Ovary (tissue), 10 donors: ENCODE measurements at regions of chr3 and their contacts with region 1.

Region 1: DNA sequence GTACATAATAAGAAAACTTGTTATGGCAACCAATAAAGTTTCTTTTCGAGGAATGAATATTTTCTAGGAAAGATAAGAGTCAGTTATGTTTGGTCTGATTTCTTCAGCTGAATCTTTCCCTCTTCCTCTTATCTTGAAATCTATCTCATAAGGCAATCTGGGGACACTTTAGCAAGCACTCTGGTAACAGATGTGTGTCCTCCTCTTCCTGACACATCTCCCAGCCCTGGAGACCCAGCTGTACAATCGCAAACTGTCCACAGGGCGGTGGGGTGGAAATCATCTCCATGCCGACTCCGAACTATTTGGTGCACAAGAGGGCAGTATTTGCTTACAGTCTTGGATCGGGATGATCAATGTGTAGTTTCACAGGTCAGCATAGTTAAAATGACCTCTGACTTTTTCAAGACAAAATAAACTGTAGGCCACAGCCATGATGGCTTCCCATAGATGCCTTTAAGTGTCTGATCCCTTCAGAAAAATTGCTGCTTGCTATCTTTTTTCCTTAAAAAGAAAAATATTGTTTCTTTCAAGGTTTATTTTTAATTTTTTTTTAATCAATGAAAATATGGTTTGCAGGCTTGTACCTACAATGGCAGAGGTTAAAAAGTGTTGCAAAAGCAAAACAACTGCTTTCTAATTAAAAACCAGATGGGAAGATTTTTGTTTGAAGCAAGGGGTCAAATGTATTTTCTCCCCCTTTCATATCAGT is 17.7 kb downstream of the EEFSEC start:
- DNase-seq: peak; percentile 58 to 73 (median 67)
- H3K4me3 ChIP-seq: no peak overlapping the region
- H3K27ac ChIP-seq: no peak overlapping the region
- H3K4me1 ChIP-seq: peaks cover 2% of the 10 kb centered on the region
- H3K27me3 ChIP-seq: no peaks in the 10 kb centered on the region
- CTCF ChIP-seq: peak; percentile 42 to 86 (median 78)
- EP300 ChIP-seq: no peak
- POLR2A ChIP-seq: no peak

Region 2: DNA sequence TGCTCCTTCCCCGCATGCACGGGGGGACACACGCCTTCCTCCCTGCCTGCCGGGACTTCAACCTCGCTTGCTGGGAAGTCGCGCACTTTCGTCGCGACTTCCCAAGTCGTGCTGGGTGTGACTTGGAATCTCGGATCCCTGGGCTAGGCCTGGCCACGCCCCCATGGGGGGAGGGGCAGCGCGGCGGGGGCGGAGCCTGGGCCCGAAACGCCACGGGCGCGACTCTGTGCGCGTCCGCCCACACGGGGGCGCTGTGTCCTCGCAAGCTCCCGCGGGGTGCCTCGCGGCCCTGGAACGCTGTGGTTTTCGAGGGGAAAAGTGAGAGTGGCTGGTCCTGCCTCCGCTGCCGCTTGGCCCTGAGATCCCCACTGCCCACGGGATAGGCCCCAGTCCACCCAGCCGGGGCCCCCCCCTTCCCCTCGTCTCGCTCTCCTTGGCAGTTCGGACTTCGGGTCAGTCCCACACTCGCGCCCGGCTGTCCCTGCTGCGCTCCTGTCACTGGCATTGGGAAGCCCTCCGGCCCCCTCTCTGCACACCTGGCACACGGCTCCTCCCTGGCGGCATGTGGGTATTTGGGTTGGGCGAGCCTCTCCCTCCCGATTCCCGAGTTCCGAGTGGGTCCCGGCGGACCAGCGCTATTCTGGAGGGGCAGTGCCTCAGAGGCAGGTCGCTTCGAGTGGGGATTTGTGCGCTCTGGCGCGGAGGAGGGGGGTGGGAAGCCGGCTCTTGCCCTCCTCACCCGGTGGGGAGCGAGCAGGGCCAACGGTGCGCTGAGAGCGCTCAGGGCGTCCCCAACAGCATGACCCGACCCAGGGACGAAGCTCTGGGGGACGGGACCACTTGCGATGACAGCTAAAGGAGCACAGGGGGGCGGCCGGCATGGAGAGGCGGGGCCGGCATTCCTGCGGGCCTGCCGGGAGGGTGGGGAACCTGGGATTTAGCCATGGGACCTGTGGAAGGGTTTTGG is 95.2 kb before region 1 on chr3:
- intact Hi-C with region 1: loop called in 1 of 4 experiments (anchors 5 kb)
- DNase-seq: peak; percentile 81 to 95 (median 92)
- H3K4me3 ChIP-seq: peak overlapping the region; percentile 32
- H3K27ac ChIP-seq: no peak overlapping the region
- H3K4me1 ChIP-seq: peaks cover 6% of the 10 kb centered on the region
- H3K27me3 ChIP-seq: no peaks in the 10 kb centered on the region
- CTCF ChIP-seq: peak; percentile 90 to 99 (median 95)
- EP300 ChIP-seq: no peak
- POLR2A ChIP-seq: no peak

Region 3: DNA sequence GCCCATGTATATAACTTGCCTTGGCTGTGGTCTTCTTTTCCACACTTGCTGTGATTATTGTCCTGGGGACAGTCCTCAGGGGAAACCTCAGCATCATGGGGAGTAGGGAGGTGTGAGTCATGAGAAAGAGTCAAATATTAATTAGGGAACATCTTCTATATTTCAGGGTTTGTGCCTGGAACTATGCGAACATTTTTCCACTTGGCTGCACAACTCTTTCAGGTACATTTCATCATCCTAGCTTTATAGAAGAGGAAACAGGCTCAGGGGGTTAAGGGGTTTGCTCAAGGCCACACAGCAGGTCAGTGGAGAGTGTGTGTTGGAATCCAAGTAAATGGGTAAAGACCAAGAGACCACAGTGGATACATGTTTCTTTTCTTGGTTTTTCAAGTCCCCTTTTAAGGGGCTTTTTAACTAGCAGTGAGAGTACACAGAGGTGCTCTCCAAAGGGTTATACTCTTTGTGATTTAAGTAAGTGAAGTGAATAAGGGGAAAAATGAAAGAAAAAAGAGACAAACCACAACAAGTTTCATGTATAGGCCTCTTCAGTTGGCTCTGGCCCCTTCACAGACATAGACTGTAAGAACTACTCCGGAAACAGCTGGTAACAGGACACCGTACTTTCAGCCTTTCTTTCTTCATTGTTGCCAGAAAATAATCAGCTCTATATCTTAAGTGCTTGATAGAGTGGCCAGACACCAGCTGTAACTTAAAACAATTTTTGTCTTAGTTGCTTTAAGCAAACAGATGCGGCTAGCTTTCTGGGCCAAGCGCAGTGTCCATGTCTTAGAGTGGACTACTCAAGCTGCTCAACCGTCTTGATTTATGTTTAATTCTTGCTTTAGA is 47.0 kb after region 1 on chr3:
- intact Hi-C with region 1: no loop called
- DNase-seq: no peak
- H3K4me3 ChIP-seq: no peak overlapping the region
- H3K27ac ChIP-seq: no peak overlapping the region
- H3K4me1 ChIP-seq: no peaks in the 10 kb centered on the region
- H3K27me3 ChIP-seq: no peaks in the 10 kb centered on the region
- CTCF ChIP-seq: no peak
- EP300 ChIP-seq: no peak
- POLR2A ChIP-seq: no peak

Region 4: DNA sequence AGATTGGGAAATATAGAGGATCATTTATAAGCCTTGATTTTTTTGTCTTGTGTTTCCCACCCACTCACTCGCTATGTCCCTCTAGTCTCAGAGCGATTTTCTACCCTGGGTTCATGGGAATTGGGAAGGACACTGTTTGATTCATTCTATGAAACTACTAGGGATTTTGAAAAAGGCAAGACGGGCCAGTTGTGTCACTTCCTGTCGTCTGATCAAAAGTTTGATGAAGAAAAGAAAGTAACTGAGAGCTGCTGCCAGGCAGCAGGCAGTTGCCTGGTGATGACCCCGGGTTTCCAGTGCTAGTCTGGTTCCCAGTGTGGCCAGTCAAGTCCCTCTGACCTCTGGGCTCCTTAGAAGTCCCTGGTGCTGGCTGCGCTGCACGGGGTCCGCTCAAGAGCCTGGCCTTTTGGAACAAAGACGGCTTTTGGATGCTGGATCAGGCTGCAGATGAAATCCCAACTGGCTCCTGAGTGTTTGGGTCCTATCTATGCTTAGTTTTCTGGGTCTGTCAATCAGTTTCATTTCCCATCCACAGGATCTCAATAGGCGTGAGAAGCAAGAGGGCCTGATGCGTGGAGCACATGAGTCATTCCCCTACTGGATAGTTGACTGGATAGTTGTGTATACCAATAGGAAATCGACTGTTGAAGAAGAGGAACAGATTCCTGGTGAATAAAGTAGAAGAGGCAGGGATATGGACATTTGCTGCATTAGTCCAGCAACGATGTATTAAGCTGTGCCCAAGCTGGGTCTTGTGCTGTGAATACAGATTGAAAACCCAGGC is 72.0 kb after region 1 on chr3:
- intact Hi-C with region 1: no loop called
- DNase-seq: no peak
- H3K4me3 ChIP-seq: no peak overlapping the region
- H3K27ac ChIP-seq: no peak overlapping the region
- H3K4me1 ChIP-seq: no peaks in the 10 kb centered on the region
- H3K27me3 ChIP-seq: no peaks in the 10 kb centered on the region
- CTCF ChIP-seq: no peak
- EP300 ChIP-seq: no peak
- POLR2A ChIP-seq: no peak

Region 5: DNA sequence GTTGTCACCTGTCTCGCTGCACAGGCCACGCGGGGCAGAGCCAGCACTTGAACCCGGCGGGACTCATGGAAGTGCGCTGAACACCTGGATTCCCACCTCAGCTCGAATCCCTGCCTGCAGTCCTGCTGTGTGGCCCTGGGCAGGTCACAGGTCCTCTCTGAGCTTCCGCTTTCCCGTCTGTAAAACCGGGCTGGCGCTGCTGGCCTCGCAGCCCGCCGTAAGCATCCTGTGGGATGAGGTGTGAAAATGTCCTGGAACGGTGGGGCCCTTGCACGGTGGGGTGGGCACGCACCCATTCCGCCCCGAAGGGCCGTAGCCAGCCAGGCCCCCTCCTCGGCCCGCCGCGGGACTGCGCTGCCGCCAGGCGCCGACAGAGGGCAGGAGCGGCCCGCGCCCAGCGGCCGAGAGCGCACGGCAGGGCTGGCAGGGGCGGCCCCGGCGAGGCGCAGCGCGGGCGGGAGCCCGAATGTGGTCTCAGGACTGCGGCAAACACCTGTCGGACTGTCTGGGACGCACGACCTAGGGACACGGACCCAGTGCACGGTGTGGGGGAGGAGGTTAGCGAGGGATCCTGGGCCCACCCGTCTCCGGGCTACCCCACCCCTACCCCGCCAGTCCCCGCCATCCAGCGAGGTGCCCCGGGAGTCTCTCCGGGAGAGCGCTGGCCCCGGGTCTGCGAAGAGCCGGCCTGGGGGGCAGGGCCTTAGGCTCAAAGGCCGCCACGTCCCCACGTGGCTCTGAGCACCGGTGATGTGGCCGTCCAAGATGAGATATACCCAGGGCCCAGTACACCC is 255.4 kb after region 1 on chr3:
- intact Hi-C with region 1: loop called in 3 of 4 experiments (anchors 5 to 10 kb)
- DNase-seq: peak; percentile 33 to 69 (median 47)
- H3K4me3 ChIP-seq: no peak overlapping the region
- H3K27ac ChIP-seq: no peak overlapping the region
- H3K4me1 ChIP-seq: no peaks in the 10 kb centered on the region
- H3K27me3 ChIP-seq: no peaks in the 10 kb centered on the region
- CTCF ChIP-seq: peak; percentile 55 to 93 (median 90)
- EP300 ChIP-seq: no peak
- POLR2A ChIP-seq: no peak